ENCODE measurements at regions of chr2 and their contacts with region 1.

Region 1: GRCh38 chr2:135531231-135532228 is at the start of gene R3HDM1:
- DNase-seq: peak in 8 of 9 donors; percentile 71 to 99 (median 98)
- ATAC-seq: peak; percentile 89
- H3K4me3 ChIP-seq: peak within 1 kb of the TSS; percentile 83
- H3K4me3 Mint-ChIP-seq: no peak within 1 kb of the TSS
- H3K27ac ChIP-seq: peak within 1 kb of the TSS; percentile 84
- H3K27ac Mint-ChIP-seq: peak within 1 kb of the TSS in 7 of 9 donors; percentile 36 to 81 (median 67)
- H3K4me1 ChIP-seq: peaks cover 4 to 21% of the 10 kb centered on the region in 2 donors
- H3K4me1 Mint-ChIP-seq: peaks cover 10 to 39% (median 34%) of the 10 kb centered on the region in 7 donors
- H3K27me3 ChIP-seq: no peaks in the 10 kb centered on the region
- H3K27me3 Mint-ChIP-seq: no peaks in the 10 kb centered on the region
- total RNA-seq, gene R3HDM1: 35.0 to 58.2 (median 47.0) TPM

Region 2: DNA sequence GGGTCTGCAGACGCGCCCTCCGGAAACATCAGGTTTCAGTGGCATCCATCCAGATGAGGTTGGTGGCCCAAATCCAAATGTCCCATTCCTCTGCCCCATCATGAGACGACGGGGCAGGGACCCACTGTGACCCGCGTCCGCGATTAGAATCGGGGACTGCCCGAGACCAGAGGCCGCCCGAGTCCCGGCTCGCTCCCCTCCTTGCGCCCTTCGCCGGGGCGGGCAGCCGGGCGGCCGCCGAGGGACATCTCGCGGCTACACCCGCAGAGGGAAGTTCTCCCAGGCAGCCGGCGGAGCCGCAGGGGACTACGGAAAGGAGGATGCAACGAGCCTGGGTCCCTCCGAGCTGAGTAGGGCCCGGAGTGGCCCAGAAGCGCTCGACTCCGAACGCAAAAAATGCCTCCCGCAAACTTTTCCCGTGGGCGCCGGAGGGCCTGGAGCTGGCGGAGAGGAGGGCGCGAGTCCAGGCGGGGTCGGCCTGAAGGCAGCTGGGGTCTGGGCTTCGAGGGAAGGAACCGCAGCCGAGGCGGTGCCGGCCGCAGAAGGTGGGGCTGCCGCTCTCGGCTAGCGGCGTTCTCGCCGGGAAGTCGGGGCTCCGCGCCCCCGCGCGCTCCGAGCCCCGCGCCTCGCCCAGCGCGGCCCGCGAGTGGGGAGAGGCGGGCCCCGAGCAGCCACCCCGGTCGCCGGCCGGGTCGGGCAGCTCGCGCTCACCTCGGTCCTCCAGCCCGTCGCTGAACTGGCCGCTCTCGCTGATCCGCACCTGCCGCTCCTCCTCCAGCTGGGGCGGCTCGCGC is 813.3 kb before region 1 on chr2:
- CTCF ChIA-PET with region 1: no interaction called
- POLR2A ChIA-PET with region 1: no interaction called
- intact Hi-C with region 1: no loop called
- DNase-seq: peak in 6 of 9 donors; percentile 7 to 27 (median 23)
- ATAC-seq: peak; percentile 66
- H3K4me3 ChIP-seq: peak overlapping the region; percentile 26
- H3K4me3 Mint-ChIP-seq: peak overlapping the region; percentile 70 to 87 (median 80)
- H3K27ac ChIP-seq: no peak overlapping the region
- H3K27ac Mint-ChIP-seq: no peak overlapping the region
- H3K4me1 ChIP-seq: no peaks in the 10 kb centered on the region
- H3K4me1 Mint-ChIP-seq: peaks cover 18 to 35% (median 27%) of the 10 kb centered on the region in 7 donors
- H3K27me3 ChIP-seq: peaks cover 0 to 6% of the 10 kb centered on the region in 2 donors
- H3K27me3 Mint-ChIP-seq: peaks cover 65 to 82% (median 69%) of the 10 kb centered on the region in 5 donors

Region 3: DNA sequence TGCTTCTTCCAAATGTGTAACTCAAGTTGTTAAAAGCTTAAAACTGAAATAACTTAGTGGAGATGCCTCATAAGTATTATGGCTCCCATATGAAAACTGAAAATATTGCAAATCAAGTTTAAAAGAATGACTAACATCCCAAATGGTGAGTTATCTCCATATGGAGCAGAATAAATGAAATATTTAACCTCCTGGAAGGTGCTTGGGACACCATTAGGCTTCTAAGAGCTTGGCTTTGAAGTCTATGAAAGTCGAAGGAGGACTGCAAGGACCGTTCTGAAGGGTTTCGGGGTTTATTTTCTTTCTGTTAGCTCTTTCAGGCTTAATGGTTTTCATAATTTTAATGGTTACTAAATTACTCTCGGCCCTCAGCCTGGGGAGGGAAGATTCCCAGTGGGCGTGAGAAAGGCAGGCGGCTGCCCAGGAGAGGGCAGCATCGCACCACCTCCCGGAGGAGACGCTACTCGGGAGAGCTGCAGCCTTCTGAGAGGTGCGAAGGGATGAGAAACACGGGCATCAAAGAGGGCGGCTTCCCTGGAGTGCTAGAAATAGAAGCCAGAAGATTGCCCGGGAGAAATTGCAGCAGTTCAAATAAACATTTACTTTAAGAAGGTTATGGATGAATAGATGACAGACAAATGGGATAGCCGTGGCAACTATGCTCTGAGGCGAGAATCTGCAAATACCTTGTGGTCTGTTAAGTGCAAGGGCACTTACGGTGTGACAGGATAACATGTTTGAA is 527.4 kb before region 1 on chr2:
- CTCF ChIA-PET with region 1: interaction called, 4 read pairs
- POLR2A ChIA-PET with region 1: interaction called, 3 read pairs
- intact Hi-C with region 1: loop called (anchors 2 to 5 kb)
- DNase-seq: peak; percentile 32 to 76 (median 62)
- ATAC-seq: peak; percentile 92
- H3K4me3 ChIP-seq: no peak overlapping the region
- H3K4me3 Mint-ChIP-seq: peak overlapping the region in 3 of 10 donors; percentile 17 to 63 (median 21)
- H3K27ac ChIP-seq: no peak overlapping the region
- H3K27ac Mint-ChIP-seq: no peak overlapping the region
- H3K4me1 ChIP-seq: no peaks in the 10 kb centered on the region
- H3K4me1 Mint-ChIP-seq: peaks cover 0 to 8% (median 5%) of the 10 kb centered on the region in 7 donors
- H3K27me3 ChIP-seq: no peaks in the 10 kb centered on the region
- H3K27me3 Mint-ChIP-seq: peaks cover 6 to 22% (median 13%) of the 10 kb centered on the region in 5 donors

Region 4: DNA sequence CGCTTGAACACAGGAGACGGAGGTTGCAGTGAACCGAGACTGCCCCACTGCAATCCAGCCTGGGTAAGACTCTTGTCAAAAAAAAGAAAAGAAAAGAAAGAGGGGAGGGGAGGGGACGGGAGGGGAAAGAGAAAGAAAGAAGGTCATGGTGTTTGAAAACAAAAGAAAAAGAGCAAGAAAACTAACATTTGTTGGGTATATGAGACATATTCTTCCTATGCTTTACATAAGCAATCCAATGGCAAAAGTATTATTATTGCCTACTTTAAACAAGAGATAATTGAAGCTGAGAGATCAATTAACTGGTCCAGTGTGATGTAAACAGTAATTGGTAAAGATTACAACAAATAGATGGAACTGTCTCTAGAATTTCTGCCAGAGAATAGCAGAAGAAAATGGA is 157.8 kb before region 1 on chr2:
- CTCF ChIA-PET with region 1: no interaction called
- POLR2A ChIA-PET with region 1: no interaction called
- intact Hi-C with region 1: no loop called
- DNase-seq: no peak
- ATAC-seq: no peak
- H3K4me3 ChIP-seq: no peak overlapping the region
- H3K4me3 Mint-ChIP-seq: no peak overlapping the region
- H3K27ac ChIP-seq: no peak overlapping the region
- H3K27ac Mint-ChIP-seq: no peak overlapping the region
- H3K4me1 ChIP-seq: no peaks in the 10 kb centered on the region
- H3K4me1 Mint-ChIP-seq: peaks cover 0 to 3% (median 0%) of the 10 kb centered on the region in 7 donors
- H3K27me3 ChIP-seq: no peaks in the 10 kb centered on the region
- H3K27me3 Mint-ChIP-seq: no peaks in the 10 kb centered on the region

Region 5: GRCh38 chr2:135657806-135658582 is 126.5 kb after region 1 on chr2:
- CTCF ChIA-PET with region 1: no interaction called
- POLR2A ChIA-PET with region 1: no interaction called
- intact Hi-C with region 1: loop called in 1 of 2 experiments (anchors 1 kb)
- DNase-seq: peak in 8 of 9 donors; percentile 12 to 71 (median 64)
- ATAC-seq: peak; percentile 81
- H3K4me3 ChIP-seq: no peak overlapping the region
- H3K4me3 Mint-ChIP-seq: peak overlapping the region; percentile 61 to 91 (median 82)
- H3K27ac ChIP-seq: peak overlapping the region; percentile 42
- H3K27ac Mint-ChIP-seq: peak overlapping the region; percentile 58 to 97 (median 89)
- H3K4me1 ChIP-seq: peaks cover 6% of the 10 kb centered on the region in 2 donors
- H3K4me1 Mint-ChIP-seq: peaks cover 0 to 26% (median 12%) of the 10 kb centered on the region in 7 donors
- H3K27me3 ChIP-seq: no peaks in the 10 kb centered on the region
- H3K27me3 Mint-ChIP-seq: no peaks in the 10 kb centered on the region

Region 6: DNA sequence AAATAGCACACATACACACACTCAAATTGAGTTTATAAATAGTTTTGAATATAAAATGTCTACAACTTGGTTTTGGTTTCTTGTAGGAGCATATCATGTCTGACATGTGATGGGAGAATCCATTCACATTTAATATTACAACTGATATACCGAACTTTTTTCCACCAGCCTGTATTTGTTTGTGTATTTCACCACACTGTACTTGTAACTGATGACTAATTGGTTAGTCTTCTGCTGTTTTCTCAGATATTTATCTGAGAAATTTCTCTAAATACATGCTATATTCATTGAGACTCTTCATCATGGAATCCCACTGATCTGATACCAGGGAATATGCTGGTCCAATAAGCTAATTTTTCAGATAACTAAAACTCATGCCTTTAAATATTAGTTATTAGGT is 153.8 kb after region 1 on chr2:
- CTCF ChIA-PET with region 1: no interaction called
- POLR2A ChIA-PET with region 1: no interaction called
- intact Hi-C with region 1: loop called in 1 of 2 experiments (anchors 1 kb)
- DNase-seq: no peak
- ATAC-seq: no peak
- H3K4me3 ChIP-seq: no peak overlapping the region
- H3K4me3 Mint-ChIP-seq: no peak overlapping the region
- H3K27ac ChIP-seq: no peak overlapping the region
- H3K27ac Mint-ChIP-seq: peak overlapping the region in 1 of 9 donors; percentile 28
- H3K4me1 ChIP-seq: peaks cover 0 to 15% of the 10 kb centered on the region in 2 donors
- H3K4me1 Mint-ChIP-seq: peaks cover 5 to 31% (median 22%) of the 10 kb centered on the region in 7 donors
- H3K27me3 ChIP-seq: no peaks in the 10 kb centered on the region
- H3K27me3 Mint-ChIP-seq: no peaks in the 10 kb centered on the region

Region 7: GRCh38 chr2:135741395-135742324 is 210.1 kb after region 1 on chr2 and contains the start of gene UBXN4:
- CTCF ChIA-PET with region 1: no interaction called
- POLR2A ChIA-PET with region 1: interaction called, 3 read pairs
- intact Hi-C with region 1: loop called (anchors 1 kb)
- DNase-seq: peak; percentile 73 to 93 (median 88)
- ATAC-seq: peak; percentile 95
- H3K4me3 ChIP-seq: peak within 1 kb of the TSS; percentile 88
- H3K4me3 Mint-ChIP-seq: peak within 1 kb of the TSS; percentile 92 to 98 (median 95)
- H3K27ac ChIP-seq: peak within 1 kb of the TSS; percentile 97
- H3K27ac Mint-ChIP-seq: peak within 1 kb of the TSS; percentile 89 to 99 (median 95)
- H3K4me1 ChIP-seq: peaks cover 20 to 22% of the 10 kb centered on the region in 2 donors
- H3K4me1 Mint-ChIP-seq: peaks cover 24 to 47% (median 43%) of the 10 kb centered on the region in 7 donors
- H3K27me3 ChIP-seq: no peaks in the 10 kb centered on the region
- H3K27me3 Mint-ChIP-seq: no peaks in the 10 kb centered on the region
- total RNA-seq, gene UBXN4: 115 to 158 (median 145) TPM

Region 8: GRCh38 chr2:135876066-135876711 is 344.7 kb after region 1 on chr2 and contains the start of gene MCM6:
- CTCF ChIA-PET with region 1: no interaction called
- POLR2A ChIA-PET with region 1: interaction called, 4 read pairs
- intact Hi-C with region 1: loop called (anchors 1 kb)
- DNase-seq: peak; percentile 91 to 99 (median 97)
- ATAC-seq: peak; percentile 96
- H3K4me3 ChIP-seq: peak within 1 kb of the TSS; percentile 83
- H3K4me3 Mint-ChIP-seq: peak within 1 kb of the TSS; percentile 85 to 97 (median 93)
- H3K27ac ChIP-seq: peak within 1 kb of the TSS; percentile 84
- H3K27ac Mint-ChIP-seq: peak within 1 kb of the TSS; percentile 84 to 97 (median 95)
- H3K4me1 ChIP-seq: peaks cover 12 to 18% of the 10 kb centered on the region in 2 donors
- H3K4me1 Mint-ChIP-seq: peaks cover 23 to 44% (median 41%) of the 10 kb centered on the region in 7 donors
- H3K27me3 ChIP-seq: no peaks in the 10 kb centered on the region
- H3K27me3 Mint-ChIP-seq: peaks cover 0 to 5% (median 0%) of the 10 kb centered on the region in 5 donors
- total RNA-seq, gene MCM6: 12.1 to 105 (median 21.6) TPM

Region 9: DNA sequence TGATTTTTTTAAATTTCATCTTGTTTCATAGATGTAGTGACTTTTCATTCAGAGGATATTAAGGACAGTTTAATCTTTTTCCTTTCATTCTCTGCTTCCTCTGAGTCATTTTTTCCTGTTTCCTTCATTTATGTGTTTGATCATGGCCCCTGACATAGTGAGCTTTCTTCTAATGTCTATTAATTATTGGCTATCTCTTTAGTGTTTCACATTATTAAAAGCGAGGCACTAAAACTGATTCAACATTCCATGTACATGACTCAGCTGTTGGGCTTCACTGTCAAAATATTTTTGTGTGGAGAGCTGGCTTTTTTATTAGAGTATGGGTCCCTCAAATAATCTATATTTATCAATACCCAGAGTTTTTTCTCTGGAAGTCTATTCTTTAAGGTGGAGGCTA is 1359.6 kb after region 1 on chr2:
- CTCF ChIA-PET with region 1: no interaction called
- POLR2A ChIA-PET with region 1: no interaction called
- intact Hi-C with region 1: no loop called
- DNase-seq: no peak
- ATAC-seq: no peak
- H3K4me3 ChIP-seq: no peak overlapping the region
- H3K4me3 Mint-ChIP-seq: no peak overlapping the region
- H3K27ac ChIP-seq: no peak overlapping the region
- H3K27ac Mint-ChIP-seq: no peak overlapping the region
- H3K4me1 ChIP-seq: no peaks in the 10 kb centered on the region
- H3K4me1 Mint-ChIP-seq: no peaks in the 10 kb centered on the region
- H3K27me3 ChIP-seq: no peaks in the 10 kb centered on the region
- H3K27me3 Mint-ChIP-seq: peaks cover 0 to 5% (median 0%) of the 10 kb centered on the region in 5 donors

Measured in naive thymus-derived CD4-positive, alpha-beta T cell (primary cell).